Gastrocnemius medialis (tissue), 4 donors: ENCODE measurements at regions of chr22 and their contacts with region 1.

Region 1: DNA sequence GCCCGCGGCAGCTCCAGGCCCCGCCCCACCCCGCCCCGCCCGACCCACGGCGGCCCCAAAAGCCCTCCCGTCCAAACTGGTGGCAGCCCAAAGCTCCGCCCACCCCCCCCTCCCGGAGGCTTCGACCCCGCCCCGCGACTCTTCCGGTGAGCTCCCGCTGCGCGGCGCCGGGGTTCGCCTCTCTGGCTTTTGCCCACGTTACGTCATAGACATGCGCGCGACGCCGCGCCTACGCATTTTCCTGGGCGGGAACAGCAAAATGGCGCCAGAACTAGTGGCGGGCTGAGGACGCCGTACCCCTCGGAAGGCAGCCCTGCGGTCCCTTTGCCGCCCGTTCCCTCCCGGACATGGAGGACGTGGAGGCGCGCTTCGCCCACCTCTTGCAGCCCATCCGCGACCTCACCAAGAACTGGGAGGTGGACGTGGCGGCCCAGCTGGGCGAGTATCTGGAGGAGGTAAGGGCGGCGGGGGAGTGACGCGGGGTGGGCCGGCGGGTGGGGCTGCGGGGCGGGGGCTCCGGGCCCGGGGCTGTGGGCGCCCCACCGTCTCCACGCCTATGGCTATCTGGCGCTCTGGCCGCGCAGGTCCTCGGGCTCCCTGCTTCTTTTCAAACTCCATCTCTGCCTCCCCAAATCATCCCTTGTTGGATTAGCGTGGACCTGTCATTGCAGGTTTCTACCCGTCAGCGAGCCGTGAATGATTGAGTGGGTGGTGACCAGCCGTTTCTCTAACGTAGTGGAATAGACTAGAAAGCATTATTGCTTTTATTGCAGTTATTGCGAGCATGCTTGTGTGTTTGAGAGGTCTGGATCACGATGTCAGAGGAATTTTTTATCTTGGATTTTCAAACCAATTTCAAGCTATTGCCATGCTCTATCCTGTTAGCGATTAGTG is at the start of gene NCAPH2:
- DNase-seq: peak; percentile 89 to 93
- ATAC-seq: peak; percentile 87 to 89
- H3K4me3 ChIP-seq: peak within 1 kb of the TSS; percentile 87 to 99 (median 96)
- H3K27ac ChIP-seq: peak within 1 kb of the TSS; percentile 85 to 97 (median 94)
- H3K4me1 ChIP-seq: peaks cover 15 to 22% of the 10 kb centered on the region in 2 donors
- H3K27me3 ChIP-seq: no peaks in the 10 kb centered on the region
- CTCF ChIP-seq: no peak
- POLR2A ChIP-seq: peak; percentile 59 to 62
- total RNA-seq, gene NCAPH2: 19.0 to 29.3 (median 23.4) TPM

Region 2: GRCh38 chr22:50474668-50475492 is 33.4 kb before region 1 on chr22 and contains the start of gene SBF1:
- in situ Hi-C with region 1: no loop called
- intact Hi-C with region 1: loop called (anchors 1 kb)
- DNase-seq: peak; percentile 85 to 89
- ATAC-seq: peak; percentile 91 to 95
- H3K4me3 ChIP-seq: peak within 1 kb of the TSS; percentile 66 to 95 (median 78)
- H3K27ac ChIP-seq: peak within 1 kb of the TSS; percentile 77 to 88 (median 86)
- H3K4me1 ChIP-seq: peaks cover 44 to 47% of the 10 kb centered on the region in 2 donors
- H3K27me3 ChIP-seq: peaks cover 2 to 7% (median 6%) of the 10 kb centered on the region in 3 donors
- CTCF ChIP-seq: no peak
- POLR2A ChIP-seq: peak; percentile 89 to 96
- total RNA-seq, gene SBF1: 50.5 to 116 (median 107) TPM

Region 3: DNA sequence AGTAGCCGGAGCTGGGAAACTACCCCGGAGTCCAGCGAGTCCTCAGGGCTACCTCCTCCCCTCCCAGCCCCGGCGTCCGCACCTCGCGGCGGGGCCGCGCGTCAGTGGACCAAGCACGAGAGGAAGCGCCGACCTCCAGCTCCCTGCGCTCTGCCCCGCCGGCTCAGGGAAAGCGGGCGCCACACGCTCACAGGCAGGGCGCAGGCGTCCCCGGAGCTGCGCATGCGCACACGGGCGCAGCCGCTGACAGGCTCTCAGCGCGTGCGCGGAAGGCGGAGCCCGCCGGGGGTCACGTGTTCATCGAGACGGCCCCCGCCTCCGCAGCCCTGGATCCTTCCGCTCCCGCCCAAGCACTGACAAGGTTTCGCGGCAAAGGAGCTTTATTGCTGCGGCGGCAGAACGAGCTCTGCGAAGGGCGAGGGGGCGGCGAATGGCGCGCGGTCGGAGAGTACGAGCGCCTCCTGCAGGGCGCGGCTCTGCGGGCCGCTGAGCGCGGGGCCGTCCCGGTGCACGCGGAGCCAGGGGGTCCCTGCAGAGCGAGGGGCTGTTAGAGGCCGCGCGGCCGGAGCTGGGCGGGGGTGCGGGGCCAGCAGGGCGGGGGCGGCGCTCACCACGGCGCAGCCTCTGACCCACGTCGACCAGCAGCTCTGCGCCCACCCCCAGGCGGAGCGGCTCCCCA is 17.3 kb after region 1 on chr22 and contains the start of gene SCO2:
- in situ Hi-C with region 1: no loop called
- intact Hi-C with region 1: loop called (anchors 1 kb)
- DNase-seq: peak; percentile 87 to 91
- ATAC-seq: peak; percentile 87
- H3K4me3 ChIP-seq: peak within 1 kb of the TSS; percentile 68 to 91 (median 83)
- H3K27ac ChIP-seq: peak within 1 kb of the TSS; percentile 84 to 92 (median 88)
- H3K4me1 ChIP-seq: peaks cover 13 to 20% of the 10 kb centered on the region in 2 donors
- H3K27me3 ChIP-seq: peaks cover 10 to 20% (median 18%) of the 10 kb centered on the region in 3 donors
- CTCF ChIP-seq: peak; percentile 36 to 57 (median 45)
- POLR2A ChIP-seq: peak; percentile 68 to 72
- total RNA-seq, gene SCO2: 1.0 to 2.3 TPM in 2 of 4 donors, not detected in the others

Region 4: DNA sequence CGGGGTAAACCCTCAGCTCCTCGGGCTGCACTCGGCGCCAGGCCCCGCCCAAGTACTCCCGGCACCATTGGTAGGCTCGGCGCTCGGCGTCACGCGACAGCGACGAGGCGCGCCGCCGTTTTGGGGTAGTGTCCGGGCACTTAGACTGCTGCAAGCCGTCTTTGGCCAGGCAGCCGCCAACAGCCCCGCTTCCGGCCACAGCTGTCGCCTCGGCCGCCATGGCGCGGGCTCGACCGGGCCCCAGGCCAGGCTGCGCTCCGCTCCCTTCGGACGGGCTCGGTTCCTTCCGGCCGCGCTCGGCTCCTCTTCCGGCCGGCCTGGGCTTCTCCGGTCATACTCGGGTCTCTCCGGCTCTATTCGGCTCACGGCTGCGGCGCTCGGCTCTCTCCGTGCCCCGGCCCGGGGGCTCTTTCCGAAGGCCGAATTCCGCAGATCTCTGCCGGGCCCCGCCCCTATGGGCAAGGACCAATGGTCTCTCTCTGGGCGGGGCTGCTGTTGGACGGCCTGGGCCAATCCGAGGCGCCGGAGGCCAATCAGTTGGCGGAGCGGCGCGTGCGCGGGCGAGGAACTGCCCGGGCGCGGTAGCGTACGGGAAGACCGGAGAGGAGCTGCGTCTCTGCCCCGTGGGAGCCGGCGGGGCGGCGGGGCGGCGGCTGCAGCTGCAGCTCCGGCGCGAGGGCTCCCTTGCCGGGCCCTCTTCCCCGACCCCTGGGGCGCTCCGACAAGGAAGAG is 74.5 kb after region 1 on chr22 and contains the start of gene CHKB:
- in situ Hi-C with region 1: no loop called
- intact Hi-C with region 1: loop called (anchors 2 kb)
- DNase-seq: peak; percentile 97 to 98
- ATAC-seq: peak; percentile 79 to 89
- H3K4me3 ChIP-seq: peak within 1 kb of the TSS; percentile 69 to 96 (median 74)
- H3K27ac ChIP-seq: peak within 1 kb of the TSS; percentile 89 to 98 (median 96)
- H3K4me1 ChIP-seq: peaks cover 27 to 39% of the 10 kb centered on the region in 2 donors
- H3K27me3 ChIP-seq: no peaks in the 10 kb centered on the region
- CTCF ChIP-seq: no peak
- POLR2A ChIP-seq: peak; percentile 96 to 98
- total RNA-seq, gene CHKB: 10.8 to 39.7 (median 24.4) TPM

Region 5: DNA sequence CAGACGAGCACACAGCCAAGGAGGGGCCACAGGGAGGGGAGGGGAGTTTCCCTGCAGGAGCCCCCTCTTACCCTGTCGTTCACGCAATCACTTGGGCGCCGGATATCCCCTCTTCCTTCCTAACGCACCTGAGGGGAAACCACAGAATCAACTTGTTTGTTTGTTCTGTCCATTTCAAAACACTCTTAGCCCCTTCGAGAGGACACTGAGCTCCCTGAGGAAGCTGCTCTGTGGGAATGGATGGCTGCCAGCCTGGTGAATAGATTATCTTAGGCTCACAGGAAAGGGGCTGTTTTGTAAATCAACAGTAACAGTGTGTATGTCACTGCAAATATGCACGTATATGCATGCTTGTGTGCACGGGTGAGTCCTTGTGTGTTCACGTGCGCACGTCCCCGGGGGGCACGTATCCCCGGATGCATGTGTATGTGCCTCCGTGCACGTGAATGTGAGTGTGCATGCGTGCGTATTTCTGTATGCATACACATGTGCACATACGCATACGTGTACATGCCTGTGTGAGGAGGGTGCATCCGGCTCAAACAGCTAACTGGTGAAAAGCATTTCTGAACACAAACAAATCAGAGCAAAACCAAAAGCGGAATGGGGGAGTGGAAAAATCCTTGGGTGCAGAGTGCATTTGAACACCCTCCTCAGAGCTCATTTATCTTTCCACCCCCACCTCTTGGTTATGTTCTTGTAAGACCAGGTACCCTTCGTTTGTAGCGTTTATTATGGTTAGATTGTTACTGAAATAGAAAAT is 112.5 kb after region 1 on chr22:
- in situ Hi-C with region 1: no loop called
- intact Hi-C with region 1: loop called (anchors 2 kb)
- DNase-seq: no peak
- ATAC-seq: peak; percentile 46 to 66
- H3K4me3 ChIP-seq: peak overlapping the region; percentile 39 to 54 (median 41)
- H3K27ac ChIP-seq: peak overlapping the region in 1 of 4 donors; percentile 13
- H3K4me1 ChIP-seq: peaks cover 21 to 22% of the 10 kb centered on the region in 2 donors
- H3K27me3 ChIP-seq: no peaks in the 10 kb centered on the region
- CTCF ChIP-seq: peak in 4 of 5 experiments; percentile 24 to 80 (median 76)
- POLR2A ChIP-seq: no peak